BJ (cell line): ENCODE measurements at regions of chr7 and their contacts with region 1.

Region 1: DNA sequence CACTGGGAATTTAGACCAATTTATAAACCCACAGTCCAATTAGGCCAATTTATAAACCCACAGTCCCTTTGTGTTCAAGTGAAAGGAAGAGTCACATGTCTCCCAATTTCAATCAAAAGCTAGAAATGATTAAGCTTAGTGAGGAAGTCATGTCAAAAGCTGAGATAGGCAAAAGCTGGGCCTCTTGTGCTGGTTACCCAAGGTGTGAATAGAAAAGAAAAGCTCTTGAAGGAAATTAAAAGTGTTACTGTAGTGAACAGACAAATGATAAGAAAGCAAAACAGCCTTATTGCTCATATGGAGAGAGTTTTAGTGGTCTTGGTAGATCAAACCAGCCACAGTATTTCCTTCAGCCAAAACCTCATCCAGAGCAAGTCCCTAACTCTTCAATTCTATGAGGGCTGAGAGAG is 245.0 kb downstream of the HDAC9 start:
- DNase-seq: no peak
- H3K4me3 ChIP-seq: no peak overlapping the region
- H3K27me3 ChIP-seq: no peaks in the 10 kb centered on the region
- CTCF ChIP-seq: no peak

Region 2: GRCh38 chr7:18461785-18462467 is 278.7 kb before region 1 on chr7:
- CTCF ChIA-PET with region 1: no interaction called
- POLR2A ChIA-PET with region 1: no interaction called
- DNase-seq: no peak
- H3K4me3 ChIP-seq: no peak overlapping the region
- H3K27me3 ChIP-seq: no peaks in the 10 kb centered on the region
- CTCF ChIP-seq: no peak

Region 3: GRCh38 chr7:18475488-18475887 is 265.1 kb before region 1 on chr7:
- CTCF ChIA-PET with region 1: no interaction called
- POLR2A ChIA-PET with region 1: no interaction called
- DNase-seq: no peak
- H3K4me3 ChIP-seq: no peak overlapping the region
- H3K27me3 ChIP-seq: no peaks in the 10 kb centered on the region
- CTCF ChIP-seq: no peak

Region 4: GRCh38 chr7:19116150-19117090 is 375.8 kb after region 1 on chr7:
- CTCF ChIA-PET with region 1: no interaction called
- POLR2A ChIA-PET with region 1: interaction called, 34 read pairs
- DNase-seq: no peak
- H3K4me3 ChIP-seq: peak overlapping the region; percentile 87
- H3K27me3 ChIP-seq: no peaks in the 10 kb centered on the region
- CTCF ChIP-seq: no peak